Adrenal gland (tissue), 19 donors: ENCODE measurements at regions of chr10 and their contacts with region 1.

Region 1: GRCh38 chr10:129888784-129889616 is 75.1 kb downstream of the EBF3 start:
- DNase-seq: peak in 5 of 7 donors; percentile 18 to 43 (median 37)
- H3K4me3 ChIP-seq: no peak overlapping the region
- H3K27ac ChIP-seq: no peak overlapping the region
- H3K4me1 ChIP-seq: no peaks in the 10 kb centered on the region
- H3K27me3 ChIP-seq: no peaks in the 10 kb centered on the region
- CTCF ChIP-seq: peak; percentile 27 to 54 (median 34)
- POLR2A ChIP-seq: no peak

Region 2: DNA sequence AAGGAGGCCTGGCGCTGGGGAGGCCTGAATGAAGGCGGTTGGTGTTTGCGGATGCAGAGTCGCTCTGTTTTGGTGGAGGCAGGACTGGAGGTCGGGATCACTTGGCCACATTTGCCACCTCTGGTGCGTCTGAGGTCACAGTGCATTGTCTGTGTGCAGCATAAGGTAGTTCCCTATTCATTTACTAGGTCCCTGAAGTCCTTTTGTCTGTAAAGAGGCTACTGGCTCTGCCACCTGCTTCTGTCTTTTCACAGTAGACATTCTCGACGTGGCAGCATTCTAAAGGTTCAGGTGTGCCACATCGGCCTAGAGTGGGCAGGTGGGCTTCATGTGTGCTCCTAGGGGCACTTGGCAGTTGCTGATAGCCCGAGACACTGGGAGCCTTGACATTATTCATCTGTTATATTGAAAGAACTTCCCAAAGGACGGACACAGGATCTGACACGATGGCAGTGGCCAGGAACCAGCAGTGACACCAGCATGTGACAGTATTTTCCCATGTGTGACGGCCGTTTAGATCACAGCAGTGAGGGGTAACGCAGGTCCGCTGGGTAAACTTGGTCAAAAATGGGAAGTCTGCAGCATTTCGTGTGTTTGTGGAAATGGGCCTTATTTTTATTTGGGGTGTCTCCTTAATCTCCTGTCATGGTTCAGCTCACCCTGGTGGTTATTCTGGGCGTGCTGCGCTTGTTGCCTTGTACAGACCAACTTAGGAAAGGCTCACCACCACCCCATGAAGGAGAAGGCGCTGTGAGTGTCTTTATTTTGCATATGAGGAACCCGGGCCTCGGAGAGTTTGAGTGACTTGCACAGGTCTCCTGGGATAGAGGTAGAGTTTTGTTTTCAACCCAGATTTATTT is 416.1 kb before region 1 on chr10:
- intact Hi-C with region 1: no loop called
- DNase-seq: no peak
- H3K4me3 ChIP-seq: no peak overlapping the region
- H3K27ac ChIP-seq: no peak overlapping the region
- H3K4me1 ChIP-seq: peaks cover under 1 to 2% of the 10 kb centered on the region in 2 donors
- H3K27me3 ChIP-seq: no peaks in the 10 kb centered on the region
- CTCF ChIP-seq: no peak
- POLR2A ChIP-seq: no peak

Region 3: GRCh38 chr10:130127364-130128061 is 238.5 kb after region 1 on chr10:
- intact Hi-C with region 1: loop called in 1 of 2 experiments (anchors 10 kb)
- DNase-seq: peak; percentile 40 to 78 (median 61)
- H3K4me3 ChIP-seq: no peak overlapping the region
- H3K27ac ChIP-seq: no peak overlapping the region
- H3K4me1 ChIP-seq: no peaks in the 10 kb centered on the region
- H3K27me3 ChIP-seq: peaks cover 4% of the 10 kb centered on the region
- CTCF ChIP-seq: peak; percentile 40 to 71 (median 62)
- POLR2A ChIP-seq: no peak